ENCODE measurements at regions of chr22 and their contacts with region 1.

Region 1: DNA sequence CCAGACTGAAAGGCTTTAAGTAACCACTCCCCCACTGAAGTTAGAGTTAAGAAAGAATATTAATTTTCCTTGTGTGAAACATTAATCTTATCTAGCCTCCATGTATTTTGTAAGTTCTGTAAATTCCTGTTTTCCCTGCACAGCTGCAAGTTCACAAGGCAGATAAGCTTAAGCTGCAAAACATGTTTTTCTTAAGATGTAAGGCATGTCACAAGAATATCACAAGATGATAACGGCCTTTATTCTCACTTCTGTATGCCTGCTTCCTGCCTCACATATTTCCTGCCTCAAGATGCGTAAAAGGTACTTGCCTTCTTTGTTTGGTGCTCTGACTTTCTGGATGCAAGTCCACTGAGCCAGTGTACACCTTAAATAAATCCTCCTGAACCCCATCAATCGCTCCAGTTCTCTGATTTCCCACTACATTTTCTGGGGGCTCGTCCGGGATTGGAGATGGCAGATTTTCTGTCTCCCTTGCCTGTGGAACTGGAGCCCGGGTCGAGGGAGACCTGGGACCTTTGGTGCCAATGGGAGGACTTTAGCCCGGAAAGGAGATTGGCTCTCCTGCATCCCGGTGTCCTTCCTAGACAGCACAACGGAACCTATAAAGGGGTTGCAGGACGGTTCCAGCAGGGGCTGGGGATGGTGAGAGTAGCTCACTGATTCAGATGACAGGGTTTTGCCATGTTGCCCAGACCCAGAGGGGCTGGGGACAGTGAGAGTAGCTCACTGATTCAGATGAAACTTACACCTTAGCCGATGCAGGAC is 30.2 kb downstream of the PPARA start:
- DNase-seq: no peak
- H3K4me3 ChIP-seq: no peak overlapping the region
- H3K27ac ChIP-seq: no peak overlapping the region
- H3K4me1 ChIP-seq: no peaks in the 10 kb centered on the region
- H3K27me3 ChIP-seq: no peaks in the 10 kb centered on the region
- CTCF ChIP-seq: no peak

Region 2: GRCh38 chr22:46139895-46140350 is 40.6 kb before region 1 on chr22:
- CTCF ChIA-PET with region 1: no interaction called
- dilution Hi-C with region 1: loop called (anchors 5 kb)
- in situ Hi-C with region 1: no loop called
- intact Hi-C with region 1: no loop called
- DNase-seq: no peak
- H3K4me3 ChIP-seq: no peak overlapping the region
- H3K27ac ChIP-seq: no peak overlapping the region
- H3K4me1 ChIP-seq: no peaks in the 10 kb centered on the region
- H3K27me3 ChIP-seq: no peaks in the 10 kb centered on the region
- CTCF ChIP-seq: no peak

Region 3: DNA sequence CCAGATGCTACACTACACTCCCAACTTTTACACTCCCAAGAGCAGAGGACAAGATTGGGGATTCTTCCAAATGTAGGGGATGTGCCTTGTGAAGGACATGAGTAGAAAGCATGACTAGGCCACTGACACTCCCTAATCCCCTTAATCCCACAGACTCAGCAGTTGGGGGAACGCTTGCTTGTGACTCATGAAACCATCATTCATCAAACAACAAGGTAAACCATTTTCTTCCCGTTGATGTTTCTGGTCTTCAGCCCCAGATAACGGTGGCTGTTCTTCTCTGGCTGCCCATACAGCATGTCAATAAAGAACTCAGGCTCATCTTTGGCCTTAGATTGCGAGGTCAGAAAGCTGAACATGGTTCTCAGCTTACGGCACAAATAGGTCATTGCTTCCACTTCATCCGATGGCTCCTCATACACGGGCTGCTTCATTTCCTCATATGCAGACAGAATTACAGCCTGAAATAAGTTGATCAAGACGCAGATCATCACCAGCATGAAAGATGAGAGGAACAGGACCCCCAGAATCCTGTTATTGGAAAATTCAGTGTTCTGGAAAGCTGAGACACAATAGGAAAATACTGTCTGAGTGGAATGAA is 75.9 kb after region 1 on chr22:
- CTCF ChIA-PET with region 1: no interaction called
- dilution Hi-C with region 1: loop called (anchors 5 kb)
- in situ Hi-C with region 1: no loop called
- intact Hi-C with region 1: no loop called
- DNase-seq: no peak
- H3K4me3 ChIP-seq: no peak overlapping the region
- H3K27ac ChIP-seq: no peak overlapping the region
- H3K4me1 ChIP-seq: no peaks in the 10 kb centered on the region
- H3K27me3 ChIP-seq: peaks cover 3% of the 10 kb centered on the region
- CTCF ChIP-seq: no peak